Naive thymus-derived CD4-positive, alpha-beta T cell (primary cell): ENCODE measurements at regions of chr2 and their contacts with region 1.

Region 1: DNA sequence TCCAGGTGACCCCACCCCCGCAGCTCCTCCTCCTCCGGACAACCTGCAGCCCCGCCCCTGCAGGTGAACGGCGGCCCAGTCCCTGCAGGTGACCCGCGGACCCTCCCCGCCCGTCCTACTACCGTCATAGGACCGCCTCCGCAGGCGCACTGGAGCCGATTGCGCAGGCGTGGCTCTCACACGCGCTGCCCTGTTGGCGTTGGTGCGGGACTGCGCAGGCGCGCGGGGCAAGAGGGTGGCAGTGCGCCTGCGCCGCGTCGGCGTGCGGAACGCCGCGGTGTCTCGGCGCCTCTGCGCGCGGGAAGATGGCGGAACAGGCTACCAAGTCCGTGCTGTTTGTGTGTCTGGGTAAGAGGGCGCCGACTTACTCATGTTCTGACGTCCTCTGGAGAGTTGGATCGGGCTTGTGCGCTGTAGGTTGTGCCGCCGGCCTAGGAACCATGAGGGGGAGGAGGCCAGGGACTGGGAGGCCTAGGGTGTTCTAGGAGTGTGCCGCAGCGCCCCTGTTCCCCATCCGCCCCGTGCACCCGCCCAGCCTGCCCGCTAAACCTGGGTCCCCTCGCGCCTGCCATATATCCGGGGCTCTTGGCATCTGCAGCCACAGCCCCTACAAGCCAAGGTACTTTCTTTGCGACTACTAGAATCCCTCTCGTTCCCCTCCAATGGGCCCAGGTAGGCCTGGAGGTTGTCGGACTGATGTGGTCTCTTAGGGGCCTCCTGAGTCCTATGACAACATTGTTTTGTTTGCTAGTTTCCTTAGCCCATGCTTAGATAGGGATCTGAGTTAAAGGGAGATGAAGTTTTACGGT is at the start of gene ACP1:
- DNase-seq: peak; percentile 93 to 99 (median 96)
- ATAC-seq: peak; percentile 89
- H3K4me3 ChIP-seq: peak within 1 kb of the TSS; percentile 90
- H3K4me3 Mint-ChIP-seq: peak within 1 kb of the TSS; percentile 81 to 98 (median 94)
- H3K27ac ChIP-seq: peak within 1 kb of the TSS; percentile 87
- H3K27ac Mint-ChIP-seq: peak within 1 kb of the TSS; percentile 84 to 98 (median 96)
- H3K4me1 ChIP-seq: peaks cover 21 to 26% of the 10 kb centered on the region in 2 donors
- H3K4me1 Mint-ChIP-seq: peaks cover 24 to 80% (median 54%) of the 10 kb centered on the region in 7 donors
- H3K27me3 ChIP-seq: no peaks in the 10 kb centered on the region
- H3K27me3 Mint-ChIP-seq: no peaks in the 10 kb centered on the region
- total RNA-seq, gene ACP1: 61.1 to 92.7 (median 86.1) TPM

Region 2: GRCh38 chr2:246489-247144 is 18.2 kb before region 1 on chr2:
- CTCF ChIA-PET with region 1: no interaction called
- POLR2A ChIA-PET with region 1: interaction called, 3 read pairs
- intact Hi-C with region 1: loop called in 1 of 2 experiments (anchors 1 kb)
- DNase-seq: peak in 7 of 9 donors; percentile 21 to 57 (median 49)
- ATAC-seq: peak; percentile 57
- H3K4me3 ChIP-seq: no peak overlapping the region
- H3K4me3 Mint-ChIP-seq: no peak overlapping the region
- H3K27ac ChIP-seq: no peak overlapping the region
- H3K27ac Mint-ChIP-seq: peak overlapping the region in 3 of 9 donors; percentile 7 to 34 (median 24)
- H3K4me1 ChIP-seq: no peaks in the 10 kb centered on the region
- H3K4me1 Mint-ChIP-seq: peaks cover 4 to 9% (median 7%) of the 10 kb centered on the region in 7 donors
- H3K27me3 ChIP-seq: no peaks in the 10 kb centered on the region
- H3K27me3 Mint-ChIP-seq: no peaks in the 10 kb centered on the region

Region 3: GRCh38 chr2:253202-253638 is 11.6 kb before region 1 on chr2:
- CTCF ChIA-PET with region 1: no interaction called
- POLR2A ChIA-PET with region 1: no interaction called
- intact Hi-C with region 1: loop called in 1 of 2 experiments (anchors 1 kb)
- DNase-seq: no peak
- ATAC-seq: no peak
- H3K4me3 ChIP-seq: no peak overlapping the region
- H3K4me3 Mint-ChIP-seq: no peak overlapping the region
- H3K27ac ChIP-seq: no peak overlapping the region
- H3K27ac Mint-ChIP-seq: no peak overlapping the region
- H3K4me1 ChIP-seq: no peaks in the 10 kb centered on the region
- H3K4me1 Mint-ChIP-seq: no peaks in the 10 kb centered on the region
- H3K27me3 ChIP-seq: no peaks in the 10 kb centered on the region
- H3K27me3 Mint-ChIP-seq: no peaks in the 10 kb centered on the region

Region 4: GRCh38 chr2:393711-394696 is 129.1 kb after region 1 on chr2:
- CTCF ChIA-PET with region 1: no interaction called
- POLR2A ChIA-PET with region 1: no interaction called
- intact Hi-C with region 1: loop called in 1 of 2 experiments (anchors 2 kb)
- DNase-seq: peak; percentile 19 to 84 (median 77)
- ATAC-seq: peak; percentile 87
- H3K4me3 ChIP-seq: peak overlapping the region; percentile 49
- H3K4me3 Mint-ChIP-seq: peak overlapping the region; percentile 76 to 91 (median 84)
- H3K27ac ChIP-seq: peak overlapping the region; percentile 69
- H3K27ac Mint-ChIP-seq: peak overlapping the region; percentile 75 to 97 (median 95)
- H3K4me1 ChIP-seq: peaks cover 0 to 4% of the 10 kb centered on the region in 2 donors
- H3K4me1 Mint-ChIP-seq: peaks cover 9 to 33% (median 21%) of the 10 kb centered on the region in 7 donors
- H3K27me3 ChIP-seq: no peaks in the 10 kb centered on the region
- H3K27me3 Mint-ChIP-seq: no peaks in the 10 kb centered on the region

Region 5: DNA sequence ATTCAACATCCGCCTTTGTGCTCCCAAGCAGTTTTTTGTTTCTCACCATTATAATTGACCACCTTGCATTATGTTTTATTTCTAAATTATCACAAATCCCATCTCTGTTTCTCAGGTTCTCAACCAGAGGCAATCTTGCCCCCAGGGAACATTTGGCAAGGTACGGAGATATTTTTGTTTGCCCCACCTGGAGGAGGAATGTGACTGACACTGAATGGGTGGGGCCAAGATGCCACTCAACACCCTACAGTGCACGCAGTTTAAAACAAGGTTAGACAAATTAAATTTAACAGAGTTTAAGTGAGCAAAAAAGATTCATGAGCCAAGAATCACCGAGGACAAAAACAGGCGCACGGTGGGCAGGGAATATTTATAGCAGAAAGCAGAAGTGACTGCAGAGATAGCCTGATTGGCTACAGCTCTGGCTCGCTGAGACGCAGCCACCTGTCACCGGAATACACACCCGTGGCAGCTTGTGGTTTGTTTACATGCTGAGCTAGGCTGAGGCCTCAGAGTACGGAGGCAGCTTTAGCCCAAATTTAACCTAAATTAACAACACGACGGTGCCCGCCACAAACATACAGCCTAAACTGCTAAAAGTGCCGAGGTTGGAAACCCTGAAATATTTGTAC is 173.0 kb after region 1 on chr2:
- CTCF ChIA-PET with region 1: no interaction called
- POLR2A ChIA-PET with region 1: no interaction called
- intact Hi-C with region 1: loop called (anchors 2 to 5 kb)
- DNase-seq: peak; percentile 35 to 87 (median 80)
- ATAC-seq: peak; percentile 99
- H3K4me3 ChIP-seq: peak overlapping the region; percentile 47
- H3K4me3 Mint-ChIP-seq: peak overlapping the region; percentile 72 to 93 (median 83)
- H3K27ac ChIP-seq: peak overlapping the region; percentile 52
- H3K27ac Mint-ChIP-seq: peak overlapping the region; percentile 66 to 98 (median 95)
- H3K4me1 ChIP-seq: peaks cover 18% of the 10 kb centered on the region in 2 donors
- H3K4me1 Mint-ChIP-seq: peaks cover 14 to 31% (median 24%) of the 10 kb centered on the region in 7 donors
- H3K27me3 ChIP-seq: no peaks in the 10 kb centered on the region
- H3K27me3 Mint-ChIP-seq: peaks cover 0 to 2% (median 0%) of the 10 kb centered on the region in 5 donors

Region 6: GRCh38 chr2:636641-637405 is 372.0 kb after region 1 on chr2:
- CTCF ChIA-PET with region 1: no interaction called
- POLR2A ChIA-PET with region 1: no interaction called
- intact Hi-C with region 1: loop called (anchors 1 to 5 kb)
- DNase-seq: peak; percentile 27 to 66 (median 45)
- ATAC-seq: peak; percentile 72
- H3K4me3 ChIP-seq: peak overlapping the region; percentile 62
- H3K4me3 Mint-ChIP-seq: peak overlapping the region; percentile 78 to 90 (median 84)
- H3K27ac ChIP-seq: peak overlapping the region; percentile 59
- H3K27ac Mint-ChIP-seq: peak overlapping the region in 8 of 9 donors; percentile 2 to 86 (median 74)
- H3K4me1 ChIP-seq: no peaks in the 10 kb centered on the region
- H3K4me1 Mint-ChIP-seq: peaks cover 0 to 5% (median 0%) of the 10 kb centered on the region in 7 donors
- H3K27me3 ChIP-seq: no peaks in the 10 kb centered on the region
- H3K27me3 Mint-ChIP-seq: peaks cover 0 to 7% (median 0%) of the 10 kb centered on the region in 5 donors

Region 7: GRCh38 chr2:677056-677965 is 412.4 kb after region 1 on chr2 and contains the start of gene TMEM18:
- CTCF ChIA-PET with region 1: no interaction called
- POLR2A ChIA-PET with region 1: no interaction called
- intact Hi-C with region 1: loop called (anchors 1 kb)
- DNase-seq: peak in 8 of 9 donors; percentile 97 to 100 (median 99)
- ATAC-seq: peak; percentile 93
- H3K4me3 ChIP-seq: peak within 1 kb of the TSS; percentile 95
- H3K4me3 Mint-ChIP-seq: peak within 1 kb of the TSS; percentile 93 to 100 (median 98)
- H3K27ac ChIP-seq: peak within 1 kb of the TSS; percentile 100
- H3K27ac Mint-ChIP-seq: peak within 1 kb of the TSS; percentile 95 to 100 (median 99)
- H3K4me1 ChIP-seq: peaks cover 0 to 4% of the 10 kb centered on the region in 2 donors
- H3K4me1 Mint-ChIP-seq: peaks cover 23 to 49% (median 40%) of the 10 kb centered on the region in 7 donors
- H3K27me3 ChIP-seq: no peaks in the 10 kb centered on the region
- H3K27me3 Mint-ChIP-seq: no peaks in the 10 kb centered on the region
- total RNA-seq, gene TMEM18: 23.3 to 39.8 (median 33.2) TPM

Region 8: DNA sequence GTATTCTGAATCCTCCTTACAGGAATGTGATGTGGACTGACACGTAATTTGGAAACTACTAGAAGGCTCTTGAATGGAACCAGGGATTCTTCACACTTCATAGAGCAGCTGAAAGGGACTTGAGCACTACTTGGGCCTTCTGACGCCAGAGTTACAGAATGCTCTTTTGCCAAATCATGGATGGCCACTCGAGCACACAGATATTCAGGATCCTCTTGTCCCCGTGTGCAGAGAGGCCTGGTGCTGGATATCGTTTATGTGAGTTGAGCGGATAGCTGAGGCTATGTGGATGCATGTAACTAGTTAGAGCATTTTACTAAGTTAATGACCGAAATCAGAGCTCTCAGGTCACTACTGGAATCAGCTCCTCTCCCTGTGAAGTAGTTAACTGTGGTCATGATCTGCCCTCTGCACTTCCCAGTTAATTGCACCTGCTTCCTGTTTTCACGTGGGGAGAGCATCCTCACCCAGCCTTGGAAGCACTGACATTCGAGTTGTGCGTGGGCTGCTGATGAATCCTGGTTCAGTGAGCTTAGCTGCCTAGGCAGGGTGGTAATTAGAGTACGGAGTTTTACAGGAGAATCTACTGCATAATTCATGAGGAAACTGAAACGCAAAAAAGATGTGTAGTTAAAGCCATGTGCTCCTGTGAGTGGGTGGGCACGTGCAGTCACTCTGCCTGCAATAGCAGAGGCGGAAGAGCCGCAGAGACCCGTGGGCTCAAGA is 1143.2 kb after region 1 on chr2:
- CTCF ChIA-PET with region 1: no interaction called
- POLR2A ChIA-PET with region 1: no interaction called
- intact Hi-C with region 1: no loop called
- DNase-seq: no peak
- ATAC-seq: no peak
- H3K4me3 ChIP-seq: no peak overlapping the region
- H3K4me3 Mint-ChIP-seq: no peak overlapping the region
- H3K27ac ChIP-seq: no peak overlapping the region
- H3K27ac Mint-ChIP-seq: peak overlapping the region in 1 of 9 donors; percentile 59
- H3K4me1 ChIP-seq: no peaks in the 10 kb centered on the region
- H3K4me1 Mint-ChIP-seq: peaks cover 5 to 13% (median 10%) of the 10 kb centered on the region in 7 donors
- H3K27me3 ChIP-seq: no peaks in the 10 kb centered on the region
- H3K27me3 Mint-ChIP-seq: peaks cover 0 to 2% (median 0%) of the 10 kb centered on the region in 5 donors